CD8-positive, alpha-beta T cell (primary cell): ENCODE measurements at regions of chrX and their contacts with region 1.

Region 1: DNA sequence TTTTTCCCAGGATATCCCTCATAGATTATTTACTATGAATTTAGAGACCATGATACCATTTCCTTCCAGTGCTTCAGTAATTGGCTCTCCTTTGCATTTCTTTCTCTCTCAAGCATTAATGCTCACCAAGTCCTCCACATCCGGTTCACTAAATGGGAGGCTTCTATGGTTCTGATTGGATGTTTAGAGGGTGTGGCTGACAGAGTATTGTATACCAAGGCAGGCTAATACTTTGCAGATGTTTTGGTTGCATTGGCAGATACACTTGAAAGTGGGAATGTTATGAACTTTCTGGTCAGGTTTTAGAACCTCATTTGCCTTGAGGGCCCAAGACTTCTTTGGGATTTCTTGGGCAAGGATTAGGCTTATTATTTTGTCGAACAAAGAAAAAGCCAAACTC is 24.2 kb downstream of the CBLL2 start:
- DNase-seq: no peak
- ATAC-seq: no peak
- H3K4me3 ChIP-seq: no peak overlapping the region
- H3K4me3 Mint-ChIP-seq: no peak overlapping the region
- H3K27ac ChIP-seq: no peak overlapping the region
- H3K27ac Mint-ChIP-seq: no peak overlapping the region
- H3K4me1 ChIP-seq: no peaks in the 10 kb centered on the region
- H3K4me1 Mint-ChIP-seq: peaks cover 8% of the 10 kb centered on the region
- H3K27me3 ChIP-seq: no peaks in the 10 kb centered on the region
- H3K27me3 Mint-ChIP-seq: peaks cover 4% of the 10 kb centered on the region
- CTCF ChIP-seq: no peak

Region 2: GRCh38 chrX:22004866-22005265 is 292.0 kb before region 1 on chrX:
- CTCF ChIA-PET with region 1: no interaction called
- POLR2A ChIA-PET with region 1: no interaction called
- intact Hi-C with region 1: loop called in 1 of 2 experiments (anchors 5 kb)
- DNase-seq: peak in 3 of 9 experiments; percentile 4 to 47 (median 28)
- ATAC-seq: no peak
- H3K4me3 ChIP-seq: no peak overlapping the region
- H3K4me3 Mint-ChIP-seq: no peak overlapping the region
- H3K27ac ChIP-seq: no peak overlapping the region
- H3K27ac Mint-ChIP-seq: peak overlapping the region; percentile 52
- H3K4me1 ChIP-seq: no peaks in the 10 kb centered on the region
- H3K4me1 Mint-ChIP-seq: peaks cover 25% of the 10 kb centered on the region
- H3K27me3 ChIP-seq: no peaks in the 10 kb centered on the region
- H3K27me3 Mint-ChIP-seq: no peaks in the 10 kb centered on the region
- CTCF ChIP-seq: no peak